HEK293 (cell line): ENCODE measurements at regions of chr9 and their contacts with region 1.

Region 1: DNA sequence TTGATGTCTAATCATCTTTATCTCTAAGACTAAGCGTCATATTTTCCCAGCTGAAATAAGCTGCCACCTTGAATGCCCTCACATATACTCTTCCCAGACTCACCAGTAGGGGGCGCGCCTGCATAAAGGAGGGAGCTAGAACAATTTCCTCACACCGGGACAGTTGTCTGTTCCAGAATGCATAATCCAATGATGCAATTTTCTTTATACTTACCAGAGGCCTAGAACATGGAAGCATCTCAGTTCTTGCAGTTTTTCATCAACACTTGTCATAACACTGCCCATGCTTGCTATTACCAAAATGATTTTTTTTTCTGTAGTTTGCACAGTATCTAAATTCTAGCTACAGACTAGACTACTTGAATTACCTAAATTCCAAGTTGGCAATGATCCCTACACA is 203.9 kb downstream of the FRMD3 start:
- H3K4me3 ChIP-seq: no peak overlapping the region
- H3K27ac ChIP-seq: no peak overlapping the region
- H3K4me1 ChIP-seq: no peaks in the 10 kb centered on the region
- CTCF ChIP-seq: peak; percentile 45; the same call in 1 of the 2 replicates

Region 2: GRCh38 chr9:82894961-82895821 is 439.1 kb before region 1 on chr9:
- CTCF ChIA-PET with region 1: no interaction called
- POLR2A ChIA-PET with region 1: no interaction called
- H3K4me3 ChIP-seq: no peak overlapping the region
- H3K27ac ChIP-seq: no peak overlapping the region
- H3K4me1 ChIP-seq: peaks cover 7% of the 10 kb centered on the region; the same call in 1 of the 2 replicates
- CTCF ChIP-seq: no peak

Region 3: DNA sequence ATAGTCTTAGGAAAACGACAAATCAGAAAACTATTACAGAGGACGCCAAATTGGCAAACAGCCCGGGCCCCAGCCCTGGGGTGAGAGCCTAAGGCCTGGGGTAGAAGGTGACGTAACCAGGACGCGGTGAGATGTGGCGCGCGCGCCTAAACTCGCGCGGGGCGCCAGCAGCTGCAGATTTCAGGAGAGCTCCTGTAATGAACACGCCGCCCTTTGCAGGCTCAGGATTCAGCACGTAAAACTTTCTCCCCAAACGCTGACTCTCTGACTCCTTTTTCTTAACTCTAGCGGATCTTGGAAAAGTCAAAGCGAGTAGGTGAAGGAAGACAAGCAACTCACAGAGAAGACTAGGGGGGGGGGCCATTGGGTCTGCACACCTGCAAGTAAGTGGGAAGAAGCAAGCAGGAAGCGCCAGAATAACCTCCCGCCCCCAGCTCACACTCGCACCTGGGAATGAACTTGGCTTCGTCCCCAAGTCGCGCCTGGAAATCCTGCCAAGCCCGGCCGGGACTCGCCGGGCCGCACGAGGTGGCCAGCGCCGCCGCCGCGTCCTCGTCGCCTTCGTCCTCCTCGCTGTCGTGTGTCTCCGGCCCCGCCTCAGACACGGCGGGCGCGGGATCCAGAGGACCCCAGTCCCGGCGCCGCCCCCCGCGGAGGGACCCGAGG is 272.2 kb before region 1 on chr9:
- CTCF ChIA-PET with region 1: no interaction called
- POLR2A ChIA-PET with region 1: no interaction called
- H3K4me3 ChIP-seq: peak overlapping the region; percentile 54
- H3K27ac ChIP-seq: peak overlapping the region; percentile 95
- H3K4me1 ChIP-seq: peaks cover 9% of the 10 kb centered on the region
- CTCF ChIP-seq: no peak

Region 4: DNA sequence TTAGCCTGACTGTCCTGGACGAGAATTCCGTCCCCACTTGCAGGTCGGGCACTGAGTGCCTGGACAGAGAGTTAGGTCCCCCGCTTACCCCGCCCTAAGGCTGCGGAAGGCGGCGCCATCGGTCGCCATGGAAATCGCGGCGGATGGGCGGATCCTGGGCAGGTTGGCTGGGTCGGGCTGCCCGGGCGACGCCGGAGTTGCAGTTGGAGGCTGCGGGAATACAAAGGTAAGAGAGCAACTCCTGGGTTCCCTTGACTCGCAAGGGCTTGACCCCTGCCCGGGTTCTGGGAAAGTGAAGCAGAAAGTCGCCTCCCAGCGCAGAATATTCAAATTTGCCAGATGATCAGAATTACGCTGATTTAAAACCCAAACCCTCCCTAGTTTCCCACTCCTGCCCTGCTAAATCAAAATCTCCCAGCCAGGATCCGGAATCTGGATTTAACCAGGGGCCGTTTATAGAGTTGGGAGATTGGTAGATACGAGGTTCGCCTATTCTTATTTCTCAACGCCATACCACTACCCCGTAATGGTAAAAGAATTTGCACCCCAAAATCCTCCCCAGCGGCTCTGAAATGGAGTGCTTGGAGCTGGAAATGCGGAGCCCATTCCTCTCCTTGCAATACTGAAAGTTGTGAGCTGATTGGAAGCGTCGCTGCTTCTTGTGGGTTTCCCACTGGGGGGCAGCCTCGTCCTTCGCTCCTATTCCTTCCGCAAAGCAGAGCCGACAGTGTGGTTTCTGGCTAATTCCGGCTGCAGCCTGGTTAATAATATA is 115.0 kb before region 1 on chr9:
- CTCF ChIA-PET with region 1: interaction called, 15 read pairs
- POLR2A ChIA-PET with region 1: no interaction called
- H3K4me3 ChIP-seq: peak overlapping the region; percentile 49
- H3K27ac ChIP-seq: no peak overlapping the region
- H3K4me1 ChIP-seq: 0 out of 2 replicates have a peak, but pooled peaks cover 2% of the 10 kb centered on the region
- CTCF ChIP-seq: 0 out of 2 replicates have a peak, but pooled peaks have one; percentile 11

Region 5: DNA sequence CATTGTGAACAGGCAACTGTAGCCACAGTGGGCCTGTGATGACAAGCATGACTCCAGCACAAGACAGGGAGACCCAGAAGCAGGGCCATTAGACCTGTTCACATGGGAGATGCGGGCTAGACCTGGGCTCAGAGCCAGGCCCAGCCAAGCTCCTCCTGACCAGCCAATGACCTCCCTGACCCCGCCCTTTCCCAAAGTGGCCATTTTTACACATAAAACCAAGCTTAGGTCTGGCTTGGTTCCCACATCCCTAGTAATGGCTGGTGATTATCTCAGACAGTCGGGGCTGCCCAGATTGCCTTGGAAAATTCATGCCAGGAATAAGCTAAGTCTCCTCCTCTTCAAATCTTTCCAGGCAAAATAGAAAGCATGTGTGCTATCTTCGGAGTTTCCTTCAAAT is 109.8 kb after region 1 on chr9:
- CTCF ChIA-PET with region 1: no interaction called
- POLR2A ChIA-PET with region 1: no interaction called
- H3K4me3 ChIP-seq: no peak overlapping the region
- H3K27ac ChIP-seq: no peak overlapping the region
- H3K4me1 ChIP-seq: no peaks in the 10 kb centered on the region
- CTCF ChIP-seq: no peak

Region 6: GRCh38 chr9:83538172-83538889 is 204.0 kb after region 1 on chr9 and contains the start of gene FRMD3:
- CTCF ChIA-PET with region 1: interaction called, 91 read pairs
- POLR2A ChIA-PET with region 1: interaction called, 4 read pairs
- H3K4me3 ChIP-seq: peak within 1 kb of the TSS; percentile 64
- H3K27ac ChIP-seq: peak within 1 kb of the TSS; percentile 46; the same call in 1 of the 2 replicates
- H3K4me1 ChIP-seq: no peaks in the 10 kb centered on the region
- CTCF ChIP-seq: peak; percentile 95

Region 7: GRCh38 chr9:83596896-83597504 is 262.7 kb after region 1 on chr9:
- CTCF ChIA-PET with region 1: interaction called, 31 read pairs
- POLR2A ChIA-PET with region 1: no interaction called
- H3K4me3 ChIP-seq: no peak overlapping the region
- H3K27ac ChIP-seq: no peak overlapping the region
- H3K4me1 ChIP-seq: no peaks in the 10 kb centered on the region
- CTCF ChIP-seq: no peak

Region 8: GRCh38 chr9:83965350-83966208 is 631.3 kb after region 1 on chr9:
- CTCF ChIA-PET with region 1: no interaction called
- POLR2A ChIA-PET with region 1: no interaction called
- H3K4me3 ChIP-seq: no peak overlapping the region
- H3K27ac ChIP-seq: no peak overlapping the region
- H3K4me1 ChIP-seq: no peaks in the 10 kb centered on the region
- CTCF ChIP-seq: no peak